AG04450 (cell line): ENCODE measurements at regions of chr7 and their contacts with region 1.

Region 1: GRCh38 chr7:45923290-45923689 is 2.2 kb upstream of the IGFBP3 start:
- DNase-seq: no peak
- H3K4me3 ChIP-seq: no peak overlapping the region
- H3K27ac ChIP-seq: no peak overlapping the region
- H3K27me3 ChIP-seq: no peaks in the 10 kb centered on the region
- CTCF ChIP-seq: peak; percentile 99

Region 2: GRCh38 chr7:45938626-45939302 is 15.5 kb after region 1 on chr7:
- CTCF ChIA-PET with region 1: interaction called, 14 read pairs
- POLR2A ChIA-PET with region 1: no interaction called
- DNase-seq: no peak
- H3K4me3 ChIP-seq: no peak overlapping the region
- H3K27ac ChIP-seq: no peak overlapping the region
- H3K27me3 ChIP-seq: no peaks in the 10 kb centered on the region
- CTCF ChIP-seq: no peak; the same call in 1 of the 2 replicates

Region 3: DNA sequence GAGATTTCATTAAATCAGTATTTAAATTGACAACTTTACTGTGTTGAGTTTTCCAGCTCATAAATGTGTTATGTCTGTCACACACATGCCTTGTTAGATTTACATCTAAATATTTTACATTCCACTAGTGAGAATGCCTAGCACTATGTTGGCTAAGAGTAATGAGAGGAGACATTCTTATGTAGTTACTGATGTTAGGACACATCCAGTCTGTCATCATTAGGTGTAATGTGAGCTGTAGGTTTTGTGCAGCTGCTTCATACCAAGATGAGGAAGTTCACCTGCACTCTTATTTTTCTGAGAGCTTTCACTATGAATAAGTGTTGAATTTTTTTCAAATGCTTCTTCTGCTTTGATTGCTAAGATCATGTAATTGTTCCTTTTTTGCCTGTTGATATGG is 215.8 kb after region 1 on chr7:
- CTCF ChIA-PET with region 1: interaction called, 19 read pairs
- POLR2A ChIA-PET with region 1: interaction called, 5 read pairs
- DNase-seq: peak; percentile 81
- H3K4me3 ChIP-seq: no peak overlapping the region
- H3K27ac ChIP-seq: no peak overlapping the region
- H3K27me3 ChIP-seq: no peaks in the 10 kb centered on the region
- CTCF ChIP-seq: no peak

Region 4: GRCh38 chr7:46344529-46344928 is 421.2 kb after region 1 on chr7:
- CTCF ChIA-PET with region 1: interaction called, 167 read pairs
- POLR2A ChIA-PET with region 1: interaction called, 3 read pairs
- DNase-seq: no peak
- H3K4me3 ChIP-seq: no peak overlapping the region
- H3K27ac ChIP-seq: no peak overlapping the region
- H3K27me3 ChIP-seq: no peaks in the 10 kb centered on the region
- CTCF ChIP-seq: no peak

Region 5: GRCh38 chr7:46369933-46370654 is 446.8 kb after region 1 on chr7:
- CTCF ChIA-PET with region 1: interaction called, 13 read pairs
- POLR2A ChIA-PET with region 1: no interaction called
- DNase-seq: peak; percentile 71
- H3K4me3 ChIP-seq: no peak overlapping the region
- H3K27ac ChIP-seq: peak overlapping the region; percentile 63
- H3K27me3 ChIP-seq: no peaks in the 10 kb centered on the region
- CTCF ChIP-seq: no peak

Region 6: DNA sequence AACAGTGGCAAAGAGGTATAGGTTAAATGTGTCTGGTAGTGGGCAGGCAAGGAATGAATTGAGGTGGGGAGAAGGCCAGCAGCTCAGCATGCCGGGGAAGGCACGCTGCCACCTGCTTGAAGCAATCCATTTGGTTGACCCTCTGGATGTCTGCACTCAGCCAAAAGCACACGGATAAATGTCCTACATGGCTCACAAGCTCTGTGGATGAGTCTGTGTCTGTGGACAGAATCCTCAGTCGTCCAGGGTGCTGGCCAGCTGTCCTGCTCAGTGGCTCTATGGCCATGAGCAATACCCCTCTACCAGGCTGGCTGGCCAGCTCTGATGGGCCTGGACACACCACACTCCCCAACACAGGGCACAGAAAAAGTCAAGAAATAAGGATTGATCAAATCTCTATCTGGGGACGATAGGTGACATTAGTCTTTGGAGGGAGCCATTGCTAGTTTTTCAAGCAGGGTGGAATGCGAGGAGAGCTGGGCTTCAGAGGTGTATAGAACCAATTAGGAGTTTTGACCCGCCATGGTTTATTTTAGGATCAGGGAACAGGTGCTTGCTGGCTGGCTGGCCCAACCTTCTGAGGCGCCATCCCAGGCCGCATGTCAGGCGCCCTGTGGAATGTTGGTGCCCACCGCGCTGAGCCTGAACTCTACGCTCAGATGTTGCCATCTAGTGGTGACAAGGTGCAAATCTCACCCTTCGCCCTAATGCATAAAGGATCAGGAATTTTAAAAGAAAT is 1165.2 kb after region 1 on chr7:
- CTCF ChIA-PET with region 1: interaction called, 25 read pairs
- POLR2A ChIA-PET with region 1: no interaction called
- DNase-seq: no peak
- H3K4me3 ChIP-seq: no peak overlapping the region
- H3K27ac ChIP-seq: no peak overlapping the region
- H3K27me3 ChIP-seq: no peaks in the 10 kb centered on the region
- CTCF ChIP-seq: peak; percentile 91

Region 7: DNA sequence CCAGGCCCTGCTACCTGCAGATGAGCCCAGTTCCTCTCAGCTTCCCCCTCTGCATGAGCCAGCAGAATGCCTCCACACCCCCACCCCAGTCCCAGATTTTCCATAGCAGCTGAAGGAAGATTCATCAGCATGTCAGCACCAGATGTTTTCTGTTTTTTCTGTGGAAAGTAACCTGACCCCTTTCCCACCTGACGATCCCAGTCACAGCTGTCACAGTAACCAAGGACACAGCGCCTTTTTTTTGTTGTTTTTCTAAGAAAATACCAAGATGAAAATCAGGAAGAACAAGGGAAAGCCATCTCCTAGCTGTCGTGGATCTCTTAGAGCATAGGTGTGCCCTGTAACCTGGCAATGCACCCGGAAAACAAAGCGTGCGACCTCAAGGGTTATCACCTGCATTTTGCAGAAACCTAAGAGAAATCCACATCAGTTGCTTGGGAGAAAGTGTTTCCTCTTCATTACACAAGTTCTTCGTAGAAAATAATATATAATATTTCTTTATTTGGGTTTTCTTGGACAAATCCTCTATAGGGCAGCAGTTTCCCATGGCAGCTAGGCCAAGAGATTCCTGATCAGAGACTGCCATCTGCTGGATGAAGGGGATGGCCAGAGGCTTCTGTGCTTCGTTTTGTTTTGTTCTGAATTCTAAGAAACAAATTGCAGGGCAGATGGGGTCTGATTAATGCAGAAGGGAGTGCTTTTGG is 1256.7 kb after region 1 on chr7:
- CTCF ChIA-PET with region 1: interaction called, 47 read pairs
- POLR2A ChIA-PET with region 1: no interaction called
- DNase-seq: peak; percentile 38
- H3K4me3 ChIP-seq: no peak overlapping the region
- H3K27ac ChIP-seq: no peak overlapping the region
- H3K27me3 ChIP-seq: peaks cover 13% of the 10 kb centered on the region
- CTCF ChIP-seq: peak; percentile 97